GM12878 (cell line): ENCODE measurements at regions of chr6 and their contacts with region 1.

Region 1: DNA sequence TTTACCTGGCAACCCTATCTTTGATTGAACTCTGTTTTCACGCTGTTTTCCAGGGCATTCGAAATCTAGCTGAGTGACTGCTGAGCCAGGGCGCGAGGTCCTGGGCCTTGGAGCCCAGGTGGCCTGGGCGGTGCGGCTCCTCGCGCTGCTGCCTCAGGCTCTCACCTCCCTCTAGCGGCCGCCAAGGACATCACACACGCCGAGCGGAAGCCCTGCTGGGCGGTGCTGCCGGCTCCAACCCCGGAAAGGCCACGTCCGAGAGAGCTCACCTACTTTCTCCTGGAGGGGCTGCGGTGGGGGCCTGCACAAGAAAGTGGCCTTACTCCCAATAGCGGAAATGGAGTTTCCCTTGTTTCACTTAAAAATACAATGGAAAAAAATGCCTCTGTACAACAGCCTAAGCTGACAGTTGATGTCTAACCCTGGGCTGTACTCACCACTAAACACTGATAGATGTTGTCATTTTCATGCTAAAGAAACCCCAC is 77.7 kb downstream of the ELOVL4 start:
- DNase-seq: peak; percentile 19
- ATAC-seq: peak; percentile 100
- H3K4me3 ChIP-seq: no peak overlapping the region
- H3K27ac ChIP-seq: 0 out of 2 replicates have a peak overlapping the region, but pooled peaks have one; percentile 1
- H3K4me1 ChIP-seq: no peaks in the 10 kb centered on the region
- H3K27me3 ChIP-seq: no peaks in the 10 kb centered on the region
- CTCF ChIP-seq: peak; percentile 90 to 98 (median 95)
- EP300 ChIP-seq: no peak
- POLR2A ChIP-seq: peak; percentile 62; the same call in 1 of the 2 replicates
- RAD21 ChIP-seq: peak; percentile 46

Region 2: DNA sequence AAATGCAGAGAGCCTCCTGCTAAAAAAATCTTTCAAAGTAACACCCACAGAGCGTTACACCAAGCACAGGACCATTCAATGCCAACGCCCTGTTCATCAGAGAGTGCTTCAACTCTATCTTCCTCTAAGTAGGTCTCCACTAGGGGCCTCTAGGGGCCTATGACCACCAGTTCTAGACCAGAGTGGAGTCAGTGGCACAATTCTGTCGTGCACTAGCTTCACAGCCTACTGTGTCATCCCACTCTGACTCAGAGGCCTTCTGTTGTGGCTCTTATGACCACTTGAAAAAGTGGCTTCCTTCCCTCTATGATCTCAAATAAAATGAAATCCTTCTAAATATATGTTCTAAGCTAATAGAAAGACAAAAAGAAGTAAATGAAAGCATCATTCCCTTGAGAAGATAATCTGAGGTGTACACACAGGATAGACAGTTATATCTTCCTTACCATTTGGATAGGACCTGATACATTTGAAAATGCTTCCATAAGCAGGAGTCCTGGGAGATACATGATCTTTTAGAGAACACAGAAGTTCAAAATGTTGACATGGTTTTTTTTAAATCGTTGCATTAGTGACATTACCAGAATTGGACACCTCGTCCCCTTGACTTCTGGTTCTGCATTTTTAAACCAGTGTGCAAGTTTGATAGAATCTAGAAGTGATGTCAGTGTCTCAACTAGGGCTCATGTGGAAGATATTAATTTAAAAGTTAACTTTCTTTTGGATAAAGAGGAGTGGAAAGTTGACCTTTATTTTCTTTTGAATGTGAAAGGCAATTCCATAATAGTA is 86.7 kb before region 1 on chr6:
- CTCF ChIA-PET with region 1: interaction called, 15 read pairs
- POLR2A ChIA-PET with region 1: no interaction called
- RAD21 ChIA-PET with region 1: interaction called, 5 read pairs
- SMC1A ChIA-PET with region 1: interaction called, 7 read pairs
- in situ Hi-C with region 1: no loop called
- intact Hi-C with region 1: loop called (anchors 2 kb)
- DNase-seq: no peak
- ATAC-seq: no peak
- H3K4me3 ChIP-seq: no peak overlapping the region
- H3K27ac ChIP-seq: no peak overlapping the region
- H3K4me1 ChIP-seq: peaks cover 5% of the 10 kb centered on the region
- H3K27me3 ChIP-seq: no peaks in the 10 kb centered on the region; a peak in 1 of 4 replicates
- CTCF ChIP-seq: no peak
- EP300 ChIP-seq: no peak
- POLR2A ChIP-seq: no peak
- RAD21 ChIP-seq: no peak

Region 3: DNA sequence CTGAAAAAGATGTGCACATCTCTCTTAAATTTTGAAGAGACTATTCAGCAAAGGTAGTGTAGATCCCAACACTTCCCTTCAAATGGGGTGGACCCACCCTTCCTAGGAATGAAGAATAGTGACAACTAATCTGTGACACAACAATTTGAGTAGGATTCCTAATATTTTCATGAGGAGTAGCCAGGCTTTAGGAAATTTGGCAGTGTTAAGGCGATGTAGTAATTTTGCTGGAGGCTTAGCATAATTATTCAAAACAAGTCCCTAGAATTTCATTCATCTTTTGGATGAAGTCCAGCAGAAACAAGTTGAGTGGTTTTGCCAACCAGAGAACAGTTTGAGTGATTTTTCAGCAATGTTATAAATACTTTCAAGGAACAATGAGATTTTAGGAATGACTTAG is 25.3 kb after region 1 on chr6:
- CTCF ChIA-PET with region 1: no interaction called
- POLR2A ChIA-PET with region 1: no interaction called
- RAD21 ChIA-PET with region 1: no interaction called
- SMC1A ChIA-PET with region 1: no interaction called
- in situ Hi-C with region 1: no loop called
- intact Hi-C with region 1: no loop called
- DNase-seq: no peak
- ATAC-seq: no peak
- H3K4me3 ChIP-seq: no peak overlapping the region
- H3K27ac ChIP-seq: no peak overlapping the region
- H3K4me1 ChIP-seq: no peaks in the 10 kb centered on the region
- H3K27me3 ChIP-seq: no peaks in the 10 kb centered on the region; a peak in 2 of 4 replicates
- CTCF ChIP-seq: no peak
- EP300 ChIP-seq: no peak
- POLR2A ChIP-seq: no peak
- RAD21 ChIP-seq: no peak

Region 4: DNA sequence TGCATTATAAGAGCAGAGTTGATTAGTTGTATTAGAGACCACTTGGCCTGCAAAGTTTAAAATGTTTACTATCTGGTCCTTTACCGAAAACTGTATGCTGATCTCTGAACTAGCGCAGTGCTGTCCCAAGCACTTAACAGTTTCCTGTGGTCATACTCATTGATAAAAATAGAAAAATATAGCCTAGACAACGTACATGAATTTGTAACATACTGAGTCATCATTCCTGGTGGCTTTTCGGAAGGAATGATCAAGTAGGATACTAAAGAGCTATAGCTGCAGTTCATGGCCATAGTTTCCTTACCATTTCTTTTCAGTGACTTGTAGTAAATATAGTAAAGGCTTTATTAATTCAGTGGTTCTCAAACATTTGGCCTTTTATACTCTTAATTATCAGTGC is 153.2 kb after region 1 on chr6:
- CTCF ChIA-PET with region 1: no interaction called
- POLR2A ChIA-PET with region 1: no interaction called
- RAD21 ChIA-PET with region 1: no interaction called
- SMC1A ChIA-PET with region 1: no interaction called
- in situ Hi-C with region 1: no loop called
- intact Hi-C with region 1: no loop called
- DNase-seq: no peak
- ATAC-seq: no peak
- H3K4me3 ChIP-seq: no peak overlapping the region
- H3K27ac ChIP-seq: no peak overlapping the region
- H3K4me1 ChIP-seq: no peaks in the 10 kb centered on the region
- H3K27me3 ChIP-seq: no peaks in the 10 kb centered on the region
- CTCF ChIP-seq: no peak
- EP300 ChIP-seq: no peak
- POLR2A ChIP-seq: no peak
- RAD21 ChIP-seq: no peak

Region 5: GRCh38 chr6:80094017-80094416 is 224.4 kb after region 1 on chr6:
- CTCF ChIA-PET with region 1: interaction called, 8 read pairs
- POLR2A ChIA-PET with region 1: no interaction called
- RAD21 ChIA-PET with region 1: no interaction called
- SMC1A ChIA-PET with region 1: interaction called, 3 read pairs
- in situ Hi-C with region 1: no loop called
- intact Hi-C with region 1: loop called (anchors 10 kb)
- DNase-seq: no peak
- ATAC-seq: peak; percentile 58
- H3K4me3 ChIP-seq: no peak overlapping the region
- H3K27ac ChIP-seq: no peak overlapping the region
- H3K4me1 ChIP-seq: 0 out of 2 replicates have a peak, but pooled peaks cover 2% of the 10 kb centered on the region
- H3K27me3 ChIP-seq: no peaks in the 10 kb centered on the region
- CTCF ChIP-seq: peak; percentile 28 to 58 (median 46); a peak in 5 of 6 replicates
- EP300 ChIP-seq: no peak
- POLR2A ChIP-seq: no peak
- RAD21 ChIP-seq: peak; percentile 67

Region 6: DNA sequence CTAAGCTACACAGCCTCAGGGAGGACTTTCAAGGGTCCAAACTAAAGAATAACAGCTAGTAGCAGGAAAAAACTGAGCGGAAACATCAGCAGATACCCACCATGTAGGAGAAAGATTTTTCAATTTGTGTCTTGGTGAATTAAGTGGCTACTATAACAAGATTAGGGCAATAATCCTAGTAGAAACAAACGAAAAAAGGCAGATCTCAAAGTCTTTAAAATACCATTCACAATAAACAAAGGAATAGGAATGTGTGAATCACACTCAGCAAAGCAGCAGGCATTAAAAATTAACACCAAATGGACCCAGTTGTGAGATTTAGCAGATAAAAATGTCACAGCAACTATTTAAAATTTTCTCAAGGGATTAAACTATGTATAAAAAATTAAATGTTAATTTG is 1121.7 kb after region 1 on chr6:
- CTCF ChIA-PET with region 1: no interaction called
- POLR2A ChIA-PET with region 1: no interaction called
- RAD21 ChIA-PET with region 1: no interaction called
- SMC1A ChIA-PET with region 1: no interaction called
- in situ Hi-C with region 1: no loop called
- intact Hi-C with region 1: no loop called
- DNase-seq: no peak
- ATAC-seq: no peak
- H3K4me3 ChIP-seq: no peak overlapping the region
- H3K27ac ChIP-seq: no peak overlapping the region
- H3K4me1 ChIP-seq: no peaks in the 10 kb centered on the region
- H3K27me3 ChIP-seq: no peaks in the 10 kb centered on the region
- CTCF ChIP-seq: no peak
- EP300 ChIP-seq: no peak
- POLR2A ChIP-seq: no peak
- RAD21 ChIP-seq: no peak